HEK293 (cell line): ENCODE measurements at regions of chr12 and their contacts with region 1.

Region 1: DNA sequence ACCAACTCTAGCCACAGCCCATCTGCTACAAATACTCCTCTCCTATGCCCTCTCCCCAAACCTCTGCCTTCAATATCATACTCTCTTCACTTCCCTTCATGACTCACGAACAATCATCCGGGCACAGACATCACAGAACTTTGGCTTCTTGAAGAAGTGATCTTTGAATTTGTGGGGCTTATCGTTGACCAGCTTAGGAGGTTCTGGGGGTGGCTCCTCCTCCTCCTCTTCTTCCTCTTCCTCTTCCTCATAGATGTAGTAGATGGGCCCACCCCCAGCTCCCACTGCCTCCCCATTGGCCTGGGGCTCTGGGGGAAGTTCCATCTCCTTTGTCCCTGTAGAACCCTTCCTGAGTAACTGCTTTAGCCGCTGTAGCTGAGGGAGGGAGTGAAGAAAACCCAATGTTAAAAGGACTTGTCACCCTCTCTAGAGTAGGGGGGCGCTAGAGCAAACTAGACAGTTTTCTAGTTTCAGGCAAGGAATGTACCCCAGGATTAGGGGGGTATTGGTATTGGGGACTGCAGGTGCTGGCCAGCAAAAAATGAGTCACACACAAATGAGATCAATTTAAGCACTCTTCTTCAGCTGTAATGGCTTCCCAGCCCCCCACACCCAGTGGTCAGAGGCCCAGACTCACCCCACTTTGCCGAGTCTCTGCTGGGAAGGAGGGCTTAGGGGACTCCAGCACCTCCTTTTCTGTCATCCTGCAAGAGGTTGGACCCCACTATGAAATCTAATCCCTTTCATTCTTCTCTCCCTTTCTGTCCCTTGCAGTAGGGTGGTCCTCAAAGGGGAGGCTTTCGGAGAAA is 1.8 kb downstream of the STAC3 start:
- H3K4me3 ChIP-seq: no peak overlapping the region
- H3K27ac ChIP-seq: no peak overlapping the region
- H3K4me1 ChIP-seq: 0 out of 2 replicates have a peak, but pooled peaks cover 4% of the 10 kb centered on the region
- CTCF ChIP-seq: no peak

Region 2: GRCh38 chr12:56947633-56948456 is 301.3 kb before region 1 on chr12:
- CTCF ChIA-PET with region 1: no interaction called
- POLR2A ChIA-PET with region 1: no interaction called
- H3K4me3 ChIP-seq: no peak overlapping the region
- H3K27ac ChIP-seq: no peak overlapping the region
- H3K4me1 ChIP-seq: no peaks in the 10 kb centered on the region
- CTCF ChIP-seq: no peak

Region 3: GRCh38 chr12:57238854-57239554 is 10.1 kb before region 1 on chr12:
- CTCF ChIA-PET with region 1: interaction called, 192 read pairs
- POLR2A ChIA-PET with region 1: interaction called, 4 read pairs
- H3K4me3 ChIP-seq: no peak overlapping the region; the same call in 1 of the 2 replicates
- H3K27ac ChIP-seq: no peak overlapping the region; the same call in 1 of the 2 replicates
- H3K4me1 ChIP-seq: peaks cover 17% of the 10 kb centered on the region
- CTCF ChIP-seq: peak; percentile 100